Dendritic cell treated with granulocyte-macrophage colony-stimulating factor and Interleukin-4, amounts not matched to agents 40 ng/mL and 50 ng/mL, for 4 days (primary cell): ENCODE measurements at regions of chr7 and their contacts with region 1.

Region 1: DNA sequence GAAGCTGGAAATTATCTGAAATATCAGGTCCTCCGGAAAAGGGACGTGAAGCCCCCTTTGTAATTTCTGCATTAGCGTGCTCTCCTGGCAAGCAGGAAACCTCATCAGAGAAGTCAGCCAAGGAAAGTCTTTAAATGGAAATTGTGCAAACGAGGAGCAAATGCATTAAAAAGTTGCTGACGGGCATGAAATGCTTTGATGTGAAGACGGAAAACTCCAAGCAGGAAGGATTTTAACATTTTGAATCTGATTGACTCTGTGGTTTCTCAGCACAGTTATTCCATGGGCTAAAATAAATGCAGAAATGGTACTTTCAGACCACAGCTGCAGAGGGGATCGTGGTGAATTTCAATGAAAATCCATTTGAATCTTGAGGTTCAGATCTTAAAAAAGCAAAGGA is 167.8 kb downstream of the AHR start:
- H3K4me3 Mint-ChIP-seq: no peak overlapping the region
- H3K27ac Mint-ChIP-seq: no peak overlapping the region
- H3K4me1 Mint-ChIP-seq: peaks cover 21% of the 10 kb centered on the region
- H3K27me3 Mint-ChIP-seq: peaks cover 3% of the 10 kb centered on the region

Region 2: GRCh38 chr7:17408245-17408903 is 57.8 kb before region 1 on chr7:
- intact Hi-C with region 1: loop called (anchors 10 kb)
- H3K4me3 Mint-ChIP-seq: no peak overlapping the region
- H3K27ac Mint-ChIP-seq: peak overlapping the region; percentile 68
- H3K4me1 Mint-ChIP-seq: peaks cover 40% of the 10 kb centered on the region
- H3K27me3 Mint-ChIP-seq: no peaks in the 10 kb centered on the region